Posterior vena cava (tissue), 2 donors: ENCODE measurements at regions of chr4 and their contacts with region 1.

Region 1: GRCh38 chr4:72564184-72564583 is 4.8 kb downstream of the ADAMTS3 start:
- DNase-seq: no peak

Region 2: DNA sequence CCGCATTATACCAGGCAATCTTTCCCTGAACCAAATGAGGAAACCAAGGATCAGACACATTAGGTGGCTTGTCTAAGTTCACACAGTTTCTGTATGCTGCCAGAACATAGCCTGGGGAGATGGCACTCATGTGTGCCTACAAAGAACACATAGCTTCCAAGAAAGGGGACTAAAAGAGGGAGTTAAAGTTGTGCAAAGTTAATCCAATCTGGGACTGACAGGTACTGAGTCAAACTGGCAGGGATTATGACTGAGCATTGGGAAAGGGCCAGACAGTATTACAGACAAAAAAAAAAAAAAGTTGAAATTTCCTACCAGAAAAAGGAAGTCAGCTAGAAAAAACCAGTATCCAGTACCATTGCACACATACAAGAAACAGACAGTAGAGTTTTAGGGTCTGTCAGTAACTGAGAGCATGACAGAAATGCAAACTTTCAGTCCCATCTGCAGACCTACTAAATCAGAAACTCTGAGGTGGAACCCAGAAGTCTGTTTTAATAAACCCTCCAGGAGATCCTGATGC is 32.4 kb before region 1 on chr4:
- intact Hi-C with region 1: loop called in 1 of 2 experiments (anchors 1 kb)
- DNase-seq: no peak